ENCODE measurements at regions of chr3 and their contacts with region 1.

Region 1: GRCh38 chr3:172666873-172667694 is 43.8 kb downstream of the NCEH1 start:
- DNase-seq: peak; percentile 85
- H3K4me3 ChIP-seq: no peak overlapping the region
- H3K27ac ChIP-seq: no peak overlapping the region
- H3K4me1 ChIP-seq: peaks cover 6% of the 10 kb centered on the region
- H3K27me3 ChIP-seq: no peaks in the 10 kb centered on the region
- CTCF ChIP-seq: peak; percentile 67 to 84
- POLR2A ChIP-seq: no peak

Region 2: GRCh38 chr3:172181932-172182586 is 485.0 kb before region 1 on chr3:
- CTCF ChIA-PET with region 1: no interaction called
- POLR2A ChIA-PET with region 1: no interaction called
- dilution Hi-C with region 1: no loop called
- intact Hi-C with region 1: no loop called
- DNase-seq: peak; percentile 76
- H3K4me3 ChIP-seq: no peak overlapping the region
- H3K27ac ChIP-seq: peak overlapping the region; percentile 62
- H3K4me1 ChIP-seq: peaks cover 38% of the 10 kb centered on the region
- H3K27me3 ChIP-seq: no peaks in the 10 kb centered on the region
- CTCF ChIP-seq: no peak
- POLR2A ChIP-seq: no peak

Region 3: DNA sequence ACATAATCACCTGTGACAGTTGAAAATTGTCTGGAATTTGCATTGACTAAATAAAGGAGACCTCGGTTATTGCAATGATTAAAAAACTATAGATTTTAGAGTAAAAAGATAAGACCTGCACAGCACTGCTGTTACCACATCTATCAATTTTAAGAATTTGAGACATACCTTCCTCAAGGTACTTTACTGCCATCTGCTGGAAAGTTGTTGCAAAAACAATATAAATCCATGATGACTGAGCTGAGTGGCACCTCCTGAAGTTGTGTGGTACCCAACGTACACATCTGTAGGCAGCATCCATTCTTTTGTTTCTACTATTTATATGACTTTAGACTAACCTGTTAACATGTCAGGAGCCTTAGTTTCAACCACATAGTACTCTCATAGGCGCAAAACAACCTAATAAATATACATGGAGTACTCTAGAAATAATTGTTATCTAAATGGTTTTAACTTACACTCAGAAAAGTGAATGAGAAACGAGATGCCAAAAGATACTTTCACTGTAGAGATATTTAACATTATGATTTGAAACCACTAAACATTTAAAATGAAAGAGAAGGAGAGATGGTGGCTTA is 325.5 kb before region 1 on chr3:
- CTCF ChIA-PET with region 1: interaction called, 22 read pairs
- POLR2A ChIA-PET with region 1: no interaction called
- dilution Hi-C with region 1: no loop called
- intact Hi-C with region 1: no loop called
- DNase-seq: peak; percentile 63
- H3K4me3 ChIP-seq: no peak overlapping the region
- H3K27ac ChIP-seq: no peak overlapping the region
- H3K4me1 ChIP-seq: no peaks in the 10 kb centered on the region
- H3K27me3 ChIP-seq: no peaks in the 10 kb centered on the region
- CTCF ChIP-seq: peak; percentile 28 to 34
- POLR2A ChIP-seq: no peak

Region 4: GRCh38 chr3:172355839-172356238 is 311.2 kb before region 1 on chr3:
- CTCF ChIA-PET with region 1: interaction called, 6 read pairs
- POLR2A ChIA-PET with region 1: no interaction called
- dilution Hi-C with region 1: no loop called
- intact Hi-C with region 1: loop called (anchors 5 kb)
- DNase-seq: peak; percentile 93
- H3K4me3 ChIP-seq: no peak overlapping the region
- H3K27ac ChIP-seq: no peak overlapping the region
- H3K4me1 ChIP-seq: peaks cover 16% of the 10 kb centered on the region
- H3K27me3 ChIP-seq: no peaks in the 10 kb centered on the region
- CTCF ChIP-seq: no peak
- POLR2A ChIP-seq: no peak

Region 5: GRCh38 chr3:172461530-172462138 is 205.4 kb before region 1 on chr3:
- CTCF ChIA-PET with region 1: interaction called, 11 read pairs
- POLR2A ChIA-PET with region 1: no interaction called
- dilution Hi-C with region 1: no loop called
- intact Hi-C with region 1: no loop called
- DNase-seq: no peak
- H3K4me3 ChIP-seq: no peak overlapping the region
- H3K27ac ChIP-seq: no peak overlapping the region
- H3K4me1 ChIP-seq: peaks cover 7% of the 10 kb centered on the region
- H3K27me3 ChIP-seq: peaks cover 0 to 2% of the 10 kb centered on the region in 2 experiments
- CTCF ChIP-seq: peak; percentile 72 to 77
- POLR2A ChIP-seq: no peak

Region 6: DNA sequence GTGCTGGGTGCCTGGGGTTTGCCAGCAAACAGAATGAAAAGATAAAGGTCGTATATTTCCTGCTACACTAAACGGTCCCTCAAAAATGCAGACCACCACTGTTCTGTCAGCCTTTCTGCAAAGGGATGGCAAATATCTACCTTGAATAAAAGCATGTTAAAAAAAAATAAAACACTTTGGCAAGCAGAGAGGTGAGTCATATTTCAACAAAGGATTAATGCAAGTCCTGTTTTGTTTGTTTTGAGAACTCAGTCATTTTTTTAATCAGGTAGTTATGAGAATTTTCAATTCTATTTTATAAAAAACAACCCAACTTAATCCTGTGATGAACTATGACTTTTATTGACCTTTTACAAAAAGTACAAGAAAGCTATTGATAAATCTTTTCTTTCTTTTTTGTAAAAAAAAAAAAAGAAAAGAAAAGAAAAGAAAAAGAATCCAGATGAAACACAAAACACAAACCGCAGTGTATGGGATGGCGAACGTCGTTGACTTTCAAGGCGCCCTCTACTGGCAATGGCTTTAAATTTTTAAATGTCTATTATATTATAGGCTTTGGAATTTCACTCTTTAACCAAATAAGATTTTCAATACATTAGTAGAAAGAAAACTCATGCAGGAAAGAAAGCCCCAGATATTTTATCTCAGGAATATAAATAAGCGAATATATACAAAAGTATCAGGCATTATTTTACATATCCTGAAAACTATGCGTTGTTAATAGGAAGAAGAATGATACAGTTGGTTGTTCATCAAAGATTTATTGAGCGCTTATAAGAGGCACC is 44.0 kb before region 1 on chr3:
- CTCF ChIA-PET with region 1: interaction called, 16 read pairs
- POLR2A ChIA-PET with region 1: no interaction called
- dilution Hi-C with region 1: no loop called
- intact Hi-C with region 1: loop called (anchors 1 kb)
- DNase-seq: peak; percentile 88
- H3K4me3 ChIP-seq: peak overlapping the region in 1 of 3 experiments; percentile 26
- H3K27ac ChIP-seq: peak overlapping the region; percentile 42
- H3K4me1 ChIP-seq: peaks cover 16% of the 10 kb centered on the region
- H3K27me3 ChIP-seq: no peaks in the 10 kb centered on the region
- CTCF ChIP-seq: peak; percentile 50 to 53
- POLR2A ChIP-seq: no peak